IMR-90 (cell line): ENCODE measurements at regions of chr11 and their contacts with region 1.

Region 1: DNA sequence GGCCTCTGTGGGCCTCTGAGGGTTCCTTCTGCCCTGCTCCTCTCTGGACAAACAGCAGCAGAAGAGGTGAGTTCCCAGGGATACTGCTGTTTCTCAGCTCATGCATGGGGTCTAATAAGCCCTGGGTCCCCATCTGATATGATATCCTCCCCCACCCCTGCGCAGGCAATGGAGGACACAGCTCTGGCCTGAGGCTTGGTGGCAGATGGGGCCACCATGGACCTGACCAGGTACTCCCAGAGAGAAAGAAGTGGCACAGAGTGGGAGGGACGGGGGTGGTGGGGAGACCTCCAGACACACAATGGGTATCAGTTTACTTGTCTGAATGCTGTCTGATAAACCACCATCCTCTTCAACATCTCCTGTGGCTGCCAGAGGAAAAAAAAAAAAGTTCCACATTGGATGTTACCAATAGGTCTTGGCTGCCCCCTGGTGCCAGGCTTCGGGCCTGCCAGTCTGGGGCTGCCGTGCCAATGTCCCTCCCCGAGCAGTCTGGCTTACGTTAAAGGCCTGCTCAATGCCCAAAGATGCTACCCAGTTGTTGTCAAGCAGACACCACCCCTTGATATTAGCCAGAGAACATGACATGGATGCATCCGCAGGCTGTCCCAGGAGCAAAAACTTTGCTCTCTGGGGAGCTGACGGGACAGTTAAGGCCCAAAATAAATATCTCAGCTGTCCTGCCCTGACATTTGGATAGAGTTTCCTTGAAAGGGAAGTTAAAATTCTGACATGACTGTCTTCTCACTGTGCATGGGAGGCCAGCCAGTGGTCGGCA is 27.9 kb upstream of the ABCC8 start:
- DNase-seq: peak; percentile 57
- ATAC-seq: peak; percentile 95
- H3K4me3 ChIP-seq: no peak overlapping the region
- H3K27ac ChIP-seq: no peak overlapping the region
- H3K4me1 ChIP-seq: no peaks in the 10 kb centered on the region
- H3K27me3 ChIP-seq: peaks cover 8% of the 10 kb centered on the region; the same call in 1 of the 2 replicates
- CTCF ChIP-seq: peak; percentile 96
- POLR2A ChIP-seq: no peak
- RAD21 ChIP-seq: peak; percentile 91

Region 2: GRCh38 chr11:16820324-16821092 is 684.0 kb before region 1 on chr11:
- CTCF ChIA-PET with region 1: no interaction called
- POLR2A ChIA-PET with region 1: no interaction called
- dilution Hi-C with region 1: no loop called
- in situ Hi-C with region 1: no loop called
- intact Hi-C with region 1: loop called (anchors 10 kb)
- DNase-seq: peak; percentile 61
- ATAC-seq: peak; percentile 89
- H3K4me3 ChIP-seq: no peak overlapping the region
- H3K27ac ChIP-seq: no peak overlapping the region
- H3K4me1 ChIP-seq: no peaks in the 10 kb centered on the region
- H3K27me3 ChIP-seq: peaks cover 29% of the 10 kb centered on the region
- CTCF ChIP-seq: peak; percentile 79
- POLR2A ChIP-seq: no peak
- RAD21 ChIP-seq: peak; percentile 63

Region 3: DNA sequence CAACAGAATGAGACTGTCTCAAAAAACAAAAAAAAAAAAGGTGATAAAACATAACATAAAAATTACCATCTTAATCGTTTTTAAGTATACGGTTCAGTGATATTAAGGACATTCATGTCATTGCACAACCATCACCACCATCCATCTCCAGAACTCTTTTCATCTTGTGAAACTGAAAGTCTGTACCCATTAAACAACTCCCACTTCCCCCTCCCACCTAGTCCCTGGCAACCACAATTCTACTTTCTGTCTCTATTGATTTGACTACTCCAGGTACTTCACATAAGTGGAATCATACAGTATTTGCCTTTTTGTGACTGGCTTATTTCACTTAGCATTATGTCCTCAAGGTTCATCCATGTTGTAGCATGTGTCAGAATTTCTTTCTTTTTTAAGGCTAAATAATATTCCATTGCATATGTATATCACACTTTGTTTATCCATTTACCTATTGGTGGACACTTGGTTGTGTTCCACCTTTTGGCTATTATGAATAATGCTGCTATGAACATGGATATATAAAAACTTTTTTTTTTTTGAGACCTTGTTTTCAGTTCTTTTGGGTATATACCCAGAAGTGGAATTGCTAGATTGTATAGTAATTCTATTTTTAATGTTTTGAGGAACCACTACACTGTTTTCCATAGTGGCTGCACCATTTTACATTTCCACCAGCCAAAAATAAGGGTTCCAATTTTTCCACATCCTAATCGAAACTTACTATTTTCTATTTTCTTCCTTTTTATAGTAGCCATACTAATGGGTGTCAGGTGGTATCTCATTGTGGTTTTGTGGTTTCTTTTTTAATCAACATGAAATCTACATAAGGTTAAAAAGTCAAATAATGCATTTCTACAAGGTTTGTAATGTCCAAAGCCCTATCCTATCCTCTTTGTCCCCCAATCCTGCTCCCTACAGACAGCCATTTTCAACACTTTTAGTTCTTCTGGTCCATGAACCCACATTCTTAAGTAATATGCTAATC is 273.4 kb before region 1 on chr11:
- CTCF ChIA-PET with region 1: no interaction called
- POLR2A ChIA-PET with region 1: no interaction called
- dilution Hi-C with region 1: no loop called
- in situ Hi-C with region 1: loop called (anchors 10 kb)
- intact Hi-C with region 1: loop called (anchors 1 kb)
- DNase-seq: no peak
- ATAC-seq: no peak
- H3K4me3 ChIP-seq: no peak overlapping the region
- H3K27ac ChIP-seq: no peak overlapping the region
- H3K4me1 ChIP-seq: no peaks in the 10 kb centered on the region
- H3K27me3 ChIP-seq: no peaks in the 10 kb centered on the region
- CTCF ChIP-seq: no peak
- POLR2A ChIP-seq: no peak
- RAD21 ChIP-seq: no peak

Region 4: GRCh38 chr11:17384002-17384511 is 120.5 kb before region 1 on chr11:
- CTCF ChIA-PET with region 1: interaction called, 16 read pairs
- POLR2A ChIA-PET with region 1: no interaction called
- dilution Hi-C with region 1: no loop called
- in situ Hi-C with region 1: loop called (anchors 5 kb)
- intact Hi-C with region 1: loop called (anchors 1 kb)
- DNase-seq: peak; percentile 79
- ATAC-seq: peak; percentile 77
- H3K4me3 ChIP-seq: no peak overlapping the region
- H3K27ac ChIP-seq: no peak overlapping the region
- H3K4me1 ChIP-seq: peaks cover 11% of the 10 kb centered on the region
- H3K27me3 ChIP-seq: peaks cover 3% of the 10 kb centered on the region; the same call in 1 of the 2 replicates
- CTCF ChIP-seq: peak; percentile 80
- POLR2A ChIP-seq: no peak
- RAD21 ChIP-seq: peak; percentile 72